HCT116 (cell line): ENCODE measurements at regions of chr6 and their contacts with region 1.

Region 1: GRCh38 chr6:6277413-6277812 is 43.0 kb downstream of the F13A1 start:
- DNase-seq: no peak
- ATAC-seq: no peak
- H3K4me3 ChIP-seq: no peak overlapping the region
- H3K27ac ChIP-seq: no peak overlapping the region
- H3K4me1 ChIP-seq: no peaks in the 10 kb centered on the region
- H3K27me3 ChIP-seq: peaks cover 13% of the 10 kb centered on the region
- CTCF ChIP-seq: no peak
- POLR2A ChIP-seq: no peak
- RAD21 ChIP-seq: no peak

Region 2: GRCh38 chr6:6074190-6074589 is 203.2 kb before region 1 on chr6:
- CTCF ChIA-PET with region 1: no interaction called
- POLR2A ChIA-PET with region 1: no interaction called
- RAD21 ChIA-PET with region 1: no interaction called
- intact Hi-C with region 1: no loop called
- DNase-seq: no peak
- ATAC-seq: no peak
- H3K4me3 ChIP-seq: no peak overlapping the region
- H3K27ac ChIP-seq: no peak overlapping the region
- H3K4me1 ChIP-seq: no peaks in the 10 kb centered on the region
- H3K27me3 ChIP-seq: peaks cover 21% of the 10 kb centered on the region
- CTCF ChIP-seq: no peak
- POLR2A ChIP-seq: no peak
- RAD21 ChIP-seq: no peak

Region 3: GRCh38 chr6:6148192-6148815 is 129.1 kb before region 1 on chr6:
- CTCF ChIA-PET with region 1: no interaction called
- POLR2A ChIA-PET with region 1: no interaction called
- RAD21 ChIA-PET with region 1: no interaction called
- intact Hi-C with region 1: no loop called
- DNase-seq: no peak
- ATAC-seq: no peak
- H3K4me3 ChIP-seq: no peak overlapping the region
- H3K27ac ChIP-seq: no peak overlapping the region
- H3K4me1 ChIP-seq: no peaks in the 10 kb centered on the region
- H3K27me3 ChIP-seq: peaks cover 26% of the 10 kb centered on the region
- CTCF ChIP-seq: no peak
- POLR2A ChIP-seq: no peak
- RAD21 ChIP-seq: no peak

Region 4: GRCh38 chr6:6259493-6259892 is 17.9 kb before region 1 on chr6:
- CTCF ChIA-PET with region 1: no interaction called
- POLR2A ChIA-PET with region 1: no interaction called
- RAD21 ChIA-PET with region 1: no interaction called
- intact Hi-C with region 1: loop called (anchors 1 kb)
- DNase-seq: no peak
- ATAC-seq: no peak
- H3K4me3 ChIP-seq: no peak overlapping the region
- H3K27ac ChIP-seq: no peak overlapping the region
- H3K4me1 ChIP-seq: no peaks in the 10 kb centered on the region
- H3K27me3 ChIP-seq: 0 out of 2 replicates have a peak, but pooled peaks cover 14% of the 10 kb centered on the region
- CTCF ChIP-seq: no peak
- POLR2A ChIP-seq: no peak
- RAD21 ChIP-seq: no peak

Region 5: GRCh38 chr6:6840831-6841291 is 563.4 kb after region 1 on chr6:
- CTCF ChIA-PET with region 1: no interaction called
- POLR2A ChIA-PET with region 1: no interaction called
- RAD21 ChIA-PET with region 1: no interaction called
- intact Hi-C with region 1: no loop called
- DNase-seq: no peak
- ATAC-seq: no peak
- H3K4me3 ChIP-seq: no peak overlapping the region
- H3K27ac ChIP-seq: no peak overlapping the region
- H3K4me1 ChIP-seq: peaks cover 8 to 45% of the 10 kb centered on the region in 2 experiments
- H3K27me3 ChIP-seq: no peaks in the 10 kb centered on the region
- CTCF ChIP-seq: no peak
- POLR2A ChIP-seq: no peak
- RAD21 ChIP-seq: no peak

Region 6: DNA sequence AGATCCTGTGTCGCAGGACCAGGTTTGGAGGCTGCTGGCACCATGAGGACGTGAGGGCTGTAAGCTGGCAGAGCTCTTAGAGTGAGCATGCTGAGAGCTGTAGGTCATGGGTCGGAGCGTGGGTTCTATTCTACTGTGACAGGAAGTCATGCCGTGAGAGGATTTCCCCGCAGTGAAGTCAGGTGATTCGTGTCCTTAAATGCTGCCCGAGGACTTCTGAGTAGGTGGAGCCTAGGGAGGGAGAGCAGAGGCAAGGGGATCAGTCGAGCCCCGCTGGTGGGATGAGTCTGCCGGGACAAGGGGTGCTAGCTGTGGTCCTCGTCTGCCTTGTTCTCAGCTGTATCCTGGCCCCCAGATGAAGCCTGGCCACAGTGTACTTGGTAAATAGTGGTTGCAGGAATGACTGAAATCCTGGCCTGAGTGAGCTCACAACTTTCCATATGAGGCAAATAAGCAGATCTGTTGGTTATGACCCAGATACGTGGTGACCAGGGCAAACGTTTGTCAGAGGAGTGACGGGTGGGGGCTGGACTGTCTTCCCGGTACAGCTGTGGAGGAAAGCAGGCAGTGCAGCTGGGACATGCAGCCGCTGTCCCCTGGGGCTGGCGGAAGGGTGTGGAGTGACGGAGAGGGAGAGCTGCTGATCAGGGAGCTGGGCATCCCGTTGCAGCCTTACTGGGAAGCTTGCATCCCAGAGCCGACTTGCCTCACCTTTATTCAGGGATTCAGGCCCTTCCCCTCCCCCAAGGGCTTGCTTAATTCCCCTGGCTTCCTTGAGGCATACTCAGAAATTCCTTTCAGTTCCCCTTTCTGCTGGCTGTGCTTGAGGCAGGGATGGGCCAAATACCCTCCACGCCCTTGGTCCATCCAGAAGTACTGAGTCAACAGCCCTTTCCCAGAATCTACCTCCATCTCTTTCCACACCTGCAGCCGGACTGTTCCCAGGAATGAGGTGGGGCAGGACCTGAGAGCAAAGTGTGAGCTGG is 579.4 kb after region 1 on chr6:
- CTCF ChIA-PET with region 1: no interaction called
- POLR2A ChIA-PET with region 1: no interaction called
- RAD21 ChIA-PET with region 1: no interaction called
- intact Hi-C with region 1: no loop called
- DNase-seq: no peak
- ATAC-seq: peak; percentile 66
- H3K4me3 ChIP-seq: peak overlapping the region in 1 of 2 experiments; percentile 25; a peak in 1 of 4 replicates
- H3K27ac ChIP-seq: no peak overlapping the region
- H3K4me1 ChIP-seq: peaks cover 10 to 20% of the 10 kb centered on the region in 2 experiments; a peak in 3 of 4 replicates
- H3K27me3 ChIP-seq: no peaks in the 10 kb centered on the region
- CTCF ChIP-seq: no peak
- POLR2A ChIP-seq: no peak
- RAD21 ChIP-seq: no peak